HEK293 (cell line): ENCODE measurements at regions of chr10 and their contacts with region 1.

Region 1: GRCh38 chr10:72337020-72337629 is 17.6 kb downstream of the DNAJB12 start:
- H3K4me3 ChIP-seq: no peak overlapping the region
- H3K27ac ChIP-seq: no peak overlapping the region
- H3K4me1 ChIP-seq: peaks cover 14% of the 10 kb centered on the region
- CTCF ChIP-seq: peak; percentile 94

Region 2: DNA sequence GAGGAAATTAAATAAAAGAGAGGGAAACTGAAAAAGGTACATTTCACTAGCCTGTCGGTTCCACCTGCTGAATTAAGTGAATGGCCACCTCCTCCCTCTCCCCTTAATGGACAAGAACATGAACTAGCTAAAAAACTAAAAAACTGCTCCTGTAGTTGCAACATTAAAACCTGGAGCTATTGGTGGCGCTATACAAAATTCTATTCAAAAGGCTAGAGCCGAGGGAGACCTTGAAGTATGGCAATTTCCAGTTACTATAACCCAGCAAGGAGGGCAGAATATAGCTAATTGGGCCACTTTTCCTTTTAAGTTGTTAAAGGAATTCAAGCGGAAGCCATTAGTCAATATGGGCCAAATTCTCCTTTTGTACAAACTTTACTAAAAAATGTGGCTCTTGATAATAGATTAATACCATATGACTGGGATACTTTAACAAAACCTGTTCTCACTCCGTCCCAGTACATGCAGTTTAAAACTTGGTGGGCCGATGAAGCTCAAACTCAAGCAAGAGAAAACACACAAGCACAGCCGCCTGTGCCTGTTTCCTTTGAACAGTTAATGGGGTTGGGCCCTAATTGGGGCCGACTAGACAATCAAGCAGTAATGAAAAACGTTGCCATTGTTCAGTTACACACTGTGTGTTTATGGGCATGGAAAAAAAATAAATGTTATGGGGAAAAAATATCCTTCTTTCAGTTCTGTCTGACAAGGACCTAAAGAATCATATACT is 379.4 kb before region 1 on chr10:
- CTCF ChIA-PET with region 1: interaction called, 15 read pairs
- POLR2A ChIA-PET with region 1: no interaction called
- H3K4me3 ChIP-seq: no peak overlapping the region
- H3K27ac ChIP-seq: no peak overlapping the region
- H3K4me1 ChIP-seq: no peaks in the 10 kb centered on the region
- CTCF ChIP-seq: no peak

Region 3: DNA sequence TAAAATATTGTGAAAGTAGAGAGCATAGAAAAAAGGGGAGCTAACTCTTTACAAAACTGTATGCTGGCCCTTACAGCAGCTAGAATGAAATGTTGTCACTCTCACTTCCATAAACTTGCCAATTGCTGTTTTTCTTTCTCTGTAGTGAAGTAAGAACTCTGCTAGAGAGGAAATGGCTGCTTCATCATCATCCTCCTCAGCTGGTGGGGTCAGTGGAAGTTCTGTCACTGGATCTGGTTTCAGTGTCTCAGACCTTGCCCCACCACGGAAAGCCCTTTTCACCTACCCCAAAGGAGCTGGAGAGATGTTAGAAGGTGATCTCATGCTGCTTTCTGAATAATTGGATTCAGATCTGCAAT is 113.4 kb before region 1 on chr10:
- CTCF ChIA-PET with region 1: interaction called, 11 read pairs
- POLR2A ChIA-PET with region 1: interaction called, 9 read pairs
- H3K4me3 ChIP-seq: no peak overlapping the region
- H3K27ac ChIP-seq: no peak overlapping the region
- H3K4me1 ChIP-seq: peaks cover 10% of the 10 kb centered on the region
- CTCF ChIP-seq: no peak

Region 4: DNA sequence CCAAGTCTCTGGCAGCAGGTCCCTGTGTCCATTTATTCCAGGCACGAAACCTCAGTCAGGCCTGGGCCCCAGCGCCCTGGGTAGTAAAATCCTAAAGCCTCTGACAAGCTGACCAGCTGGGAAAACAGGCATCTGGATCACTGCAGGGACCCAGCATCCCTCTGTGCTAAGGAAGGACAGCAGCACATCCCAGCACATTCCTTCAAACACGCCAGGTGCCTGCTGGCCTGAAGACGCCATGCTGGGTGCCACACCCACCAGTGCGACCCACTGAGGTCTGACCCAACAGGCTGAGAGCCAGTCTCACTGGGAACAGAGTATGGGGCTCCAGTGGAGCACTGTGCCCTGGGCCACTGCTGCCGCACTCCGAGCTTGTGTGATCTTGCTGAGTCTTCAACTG is 11.2 kb after region 1 on chr10:
- CTCF ChIA-PET with region 1: interaction called, 10 read pairs
- POLR2A ChIA-PET with region 1: interaction called, 6 read pairs
- H3K4me3 ChIP-seq: no peak overlapping the region
- H3K27ac ChIP-seq: no peak overlapping the region
- H3K4me1 ChIP-seq: no peaks in the 10 kb centered on the region; the same call in 1 of the 2 replicates
- CTCF ChIP-seq: no peak

Region 5: GRCh38 chr10:72637398-72637857 is 300.3 kb after region 1 on chr10:
- CTCF ChIA-PET with region 1: no interaction called
- POLR2A ChIA-PET with region 1: no interaction called
- H3K4me3 ChIP-seq: no peak overlapping the region
- H3K27ac ChIP-seq: no peak overlapping the region
- H3K4me1 ChIP-seq: no peaks in the 10 kb centered on the region
- CTCF ChIP-seq: no peak